ENCODE measurements at regions of chrX and their contacts with region 1.

Region 1: GRCh38 chrX:72126539-72127140 is 5.1 kb downstream of the RTL5 start:
- DNase-seq: peak; percentile 88
- H3K4me3 ChIP-seq: no peak overlapping the region
- H3K27ac ChIP-seq: no peak overlapping the region
- H3K4me1 ChIP-seq: peaks cover 30% of the 10 kb centered on the region
- H3K27me3 ChIP-seq: no peaks in the 10 kb centered on the region
- CTCF ChIP-seq: peak; percentile 90

Region 2: GRCh38 chrX:71998836-71999509 is 127.7 kb before region 1 on chrX:
- CTCF ChIA-PET with region 1: interaction called, 6 read pairs
- POLR2A ChIA-PET with region 1: no interaction called
- intact Hi-C with region 1: loop called (anchors 1 kb)
- DNase-seq: peak; percentile 59
- H3K4me3 ChIP-seq: no peak overlapping the region
- H3K27ac ChIP-seq: no peak overlapping the region
- H3K4me1 ChIP-seq: peaks cover 12% of the 10 kb centered on the region
- H3K27me3 ChIP-seq: no peaks in the 10 kb centered on the region
- CTCF ChIP-seq: peak; percentile 76

Region 3: DNA sequence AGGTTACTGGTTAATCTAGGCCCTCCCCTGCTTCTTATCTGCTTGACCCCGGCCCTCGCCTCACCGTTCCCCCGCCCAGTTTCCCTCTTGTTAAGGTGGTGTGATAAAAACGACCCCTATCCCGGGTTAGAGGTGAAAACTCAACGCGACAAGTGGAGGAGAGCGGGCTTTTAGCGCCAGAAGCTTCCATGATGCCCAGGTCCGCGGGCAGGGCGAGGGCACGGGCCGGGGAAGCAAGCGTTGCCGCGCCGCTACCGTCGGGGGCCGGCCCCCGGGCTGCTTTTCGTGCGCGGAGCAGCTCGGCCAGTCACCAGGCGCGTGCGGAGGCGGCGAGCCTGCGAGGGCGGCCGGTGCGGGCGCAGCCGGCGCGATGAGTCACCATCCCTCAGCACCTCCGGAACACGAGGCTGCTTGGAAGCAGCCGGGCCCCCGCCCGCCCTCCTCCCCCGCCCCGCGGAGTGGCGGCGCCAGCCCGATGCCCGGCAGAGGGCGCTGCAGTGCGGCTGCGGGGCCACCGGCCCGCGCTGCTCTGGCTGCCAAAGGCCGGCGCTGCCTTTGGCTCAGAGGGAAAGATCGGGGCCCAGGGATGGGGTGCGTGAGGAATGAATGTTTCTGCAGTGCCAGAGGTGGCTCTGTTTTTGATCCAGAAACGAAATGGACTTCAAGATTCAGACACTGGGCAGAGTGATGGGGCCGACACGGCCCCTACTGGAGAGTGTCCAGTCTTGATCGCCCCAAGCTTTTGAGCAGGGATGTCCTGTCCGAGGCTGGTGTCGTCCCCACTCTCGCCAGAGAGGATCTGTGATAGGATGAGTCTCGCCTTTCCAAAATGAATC is 108.1 kb before region 1 on chrX:
- CTCF ChIA-PET with region 1: interaction called, 4 read pairs
- POLR2A ChIA-PET with region 1: no interaction called
- intact Hi-C with region 1: loop called (anchors 1 kb)
- DNase-seq: peak; percentile 86
- H3K4me3 ChIP-seq: no peak overlapping the region
- H3K27ac ChIP-seq: no peak overlapping the region
- H3K4me1 ChIP-seq: no peaks in the 10 kb centered on the region
- H3K27me3 ChIP-seq: peaks cover 14% of the 10 kb centered on the region
- CTCF ChIP-seq: peak; percentile 57

Region 4: GRCh38 chrX:72115380-72115779 is 11.3 kb before region 1 on chrX:
- CTCF ChIA-PET with region 1: no interaction called
- POLR2A ChIA-PET with region 1: no interaction called
- intact Hi-C with region 1: no loop called
- DNase-seq: peak; percentile 43
- H3K4me3 ChIP-seq: no peak overlapping the region
- H3K27ac ChIP-seq: no peak overlapping the region
- H3K4me1 ChIP-seq: peaks cover 28% of the 10 kb centered on the region
- H3K27me3 ChIP-seq: no peaks in the 10 kb centered on the region
- CTCF ChIP-seq: no peak

Region 5: GRCh38 chrX:72158773-72159172 is 32.1 kb after region 1 on chrX:
- CTCF ChIA-PET with region 1: interaction called, 11 read pairs
- POLR2A ChIA-PET with region 1: no interaction called
- intact Hi-C with region 1: no loop called
- DNase-seq: no peak
- H3K4me3 ChIP-seq: no peak overlapping the region
- H3K27ac ChIP-seq: no peak overlapping the region
- H3K4me1 ChIP-seq: no peaks in the 10 kb centered on the region
- H3K27me3 ChIP-seq: no peaks in the 10 kb centered on the region
- CTCF ChIP-seq: no peak